AG04449 (cell line): ENCODE measurements at regions of chr1 and their contacts with region 1.

Region 1: DNA sequence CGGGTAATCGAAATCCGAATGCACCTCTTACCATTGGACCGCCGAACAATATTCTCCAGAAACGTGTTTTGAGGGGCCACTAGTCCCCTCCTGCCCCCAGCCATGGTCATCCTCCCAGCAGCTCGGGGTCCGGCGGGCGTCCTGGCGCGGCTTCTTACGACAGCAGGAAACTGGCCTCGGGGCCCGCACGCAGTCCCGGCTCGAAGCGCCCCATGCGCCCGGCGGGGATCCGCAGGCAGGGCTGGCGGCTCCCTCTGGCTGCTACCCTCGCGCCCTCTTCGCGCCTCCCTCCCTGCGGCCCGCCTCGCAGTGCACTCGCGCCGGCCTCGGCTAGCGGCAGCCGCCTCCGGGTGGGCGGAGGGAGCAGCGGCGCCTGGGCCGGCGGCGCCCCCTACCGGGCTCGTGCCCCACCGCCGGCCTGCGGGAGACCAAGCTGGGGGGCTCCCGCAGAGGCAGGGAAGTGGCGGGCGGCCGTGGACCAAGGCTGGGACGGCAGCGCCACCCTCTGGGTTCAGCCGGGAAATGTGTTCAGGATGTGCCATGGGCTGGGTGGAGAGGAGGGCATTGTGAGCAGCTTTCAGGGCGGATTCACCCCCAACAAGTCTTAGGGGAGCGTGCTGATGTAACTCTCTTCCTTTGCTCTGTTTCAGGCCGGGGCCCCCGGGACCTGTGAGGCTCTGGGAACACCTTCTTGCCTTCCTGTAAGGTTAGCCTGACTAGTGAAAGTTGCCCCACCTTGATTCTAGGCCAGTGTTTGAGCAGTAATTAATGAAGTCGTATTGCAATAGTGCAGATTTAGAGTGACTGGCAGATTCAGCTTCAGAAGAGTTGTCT is at the start of gene KCNH1:
- DNase-seq: no peak
- H3K4me3 ChIP-seq: peak within 1 kb of the TSS; percentile 66
- CTCF ChIP-seq: peak; percentile 83

Region 2: DNA sequence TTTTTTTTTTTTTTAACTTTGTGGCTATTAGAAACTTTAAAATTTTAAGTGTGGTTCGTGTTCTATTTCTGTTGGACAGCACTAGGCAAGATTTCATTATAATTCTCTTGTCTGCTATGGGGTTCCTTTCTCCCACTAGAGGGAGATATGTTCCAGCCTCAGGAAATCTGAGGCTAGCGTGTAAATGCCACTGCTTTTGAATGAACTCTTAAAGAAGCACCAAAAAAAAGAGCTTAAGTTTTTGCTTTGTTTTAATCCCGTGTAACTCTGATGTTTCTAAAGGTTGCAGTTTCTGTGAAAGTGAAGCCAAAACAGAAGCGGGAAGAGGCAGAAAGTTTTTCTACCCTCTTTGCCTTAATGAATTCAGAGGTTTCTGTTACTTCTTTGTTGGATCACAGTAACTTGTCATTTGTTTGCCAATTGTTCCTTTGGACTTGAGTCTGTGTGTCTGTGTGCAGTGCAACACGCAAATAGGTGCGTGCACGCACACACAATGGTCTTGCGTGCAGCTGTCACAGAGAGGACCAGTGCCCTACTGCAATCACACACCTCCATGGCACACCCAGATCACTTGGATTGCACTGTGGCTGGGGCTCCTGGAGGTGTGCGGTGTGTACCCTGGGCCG is 773.1 kb before region 1 on chr1:
- CTCF ChIA-PET with region 1: interaction called, 16 read pairs
- POLR2A ChIA-PET with region 1: no interaction called
- DNase-seq: peak; percentile 37
- H3K4me3 ChIP-seq: no peak overlapping the region
- CTCF ChIP-seq: peak; percentile 60

Region 3: GRCh38 chr1:210415846-210416448 is 718.1 kb before region 1 on chr1:
- CTCF ChIA-PET with region 1: interaction called, 116 read pairs
- POLR2A ChIA-PET with region 1: no interaction called
- DNase-seq: no peak
- H3K4me3 ChIP-seq: no peak overlapping the region
- CTCF ChIP-seq: no peak

Region 4: GRCh38 chr1:210455840-210456603 is 678.0 kb before region 1 on chr1:
- CTCF ChIA-PET with region 1: interaction called, 403 read pairs
- POLR2A ChIA-PET with region 1: no interaction called
- DNase-seq: no peak
- H3K4me3 ChIP-seq: no peak overlapping the region
- CTCF ChIP-seq: no peak

Region 5: DNA sequence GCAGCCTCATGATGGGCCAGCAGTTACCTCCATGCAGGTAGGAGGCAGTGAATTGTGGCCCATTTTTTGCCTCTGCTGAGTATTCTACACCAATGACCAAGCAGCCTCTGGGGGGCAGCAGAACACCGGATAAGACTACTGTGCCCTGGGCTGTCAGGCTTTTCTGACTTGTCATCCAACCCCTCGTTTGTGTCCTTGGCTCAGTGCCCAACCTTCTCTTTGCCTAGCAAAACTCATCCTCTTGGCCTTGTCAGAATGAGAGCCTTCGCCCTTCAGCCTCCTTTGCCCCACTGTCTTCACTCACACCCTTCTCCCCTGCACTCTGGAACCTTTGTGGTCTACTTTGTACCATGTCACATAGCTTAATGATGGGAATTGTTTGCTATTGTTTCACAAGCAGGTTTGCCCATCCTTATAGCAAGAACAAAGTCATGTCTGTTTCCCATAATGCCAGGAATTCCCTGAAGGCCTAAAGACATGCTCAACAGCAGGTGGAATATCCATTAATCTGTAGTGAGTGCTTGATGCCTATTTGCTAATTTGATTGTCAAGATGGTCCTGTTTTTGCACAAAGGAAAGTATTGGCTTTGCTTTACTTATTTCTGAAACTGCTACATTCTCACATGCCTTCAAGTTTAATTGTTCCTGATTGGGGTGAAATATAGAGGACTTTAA is 549.5 kb before region 1 on chr1:
- CTCF ChIA-PET with region 1: interaction called, 363 read pairs
- POLR2A ChIA-PET with region 1: no interaction called
- DNase-seq: no peak
- H3K4me3 ChIP-seq: no peak overlapping the region
- CTCF ChIP-seq: peak; percentile 82

Region 6: DNA sequence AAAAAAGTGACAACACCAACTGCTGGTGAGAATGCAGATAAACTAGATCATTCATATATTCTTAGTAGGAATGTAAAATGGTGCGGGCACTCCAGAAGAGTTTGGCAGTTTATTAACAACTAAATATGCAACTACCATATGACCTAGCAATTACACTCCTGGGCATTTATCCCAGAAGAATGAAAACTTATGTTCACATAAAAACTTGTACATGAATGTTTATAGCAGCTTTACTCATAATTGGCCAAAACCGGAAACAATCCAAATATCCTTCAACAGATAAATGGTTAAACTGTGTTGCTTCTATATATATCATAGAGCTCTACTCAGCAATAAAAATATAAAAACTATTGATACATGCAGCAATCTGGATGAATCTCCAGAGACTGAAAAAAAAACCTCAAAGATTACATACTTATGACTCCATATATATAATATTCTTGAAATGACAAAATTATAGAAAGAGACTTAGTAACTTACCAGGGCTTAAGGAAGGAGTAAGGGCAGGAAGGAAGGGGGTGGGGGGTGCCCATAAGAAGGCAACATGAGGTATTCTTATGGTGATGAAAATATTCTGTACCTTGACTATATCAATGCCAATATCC is 100.0 kb before region 1 on chr1:
- CTCF ChIA-PET with region 1: no interaction called
- POLR2A ChIA-PET with region 1: no interaction called
- DNase-seq: no peak
- H3K4me3 ChIP-seq: no peak overlapping the region
- CTCF ChIP-seq: no peak

Region 7: DNA sequence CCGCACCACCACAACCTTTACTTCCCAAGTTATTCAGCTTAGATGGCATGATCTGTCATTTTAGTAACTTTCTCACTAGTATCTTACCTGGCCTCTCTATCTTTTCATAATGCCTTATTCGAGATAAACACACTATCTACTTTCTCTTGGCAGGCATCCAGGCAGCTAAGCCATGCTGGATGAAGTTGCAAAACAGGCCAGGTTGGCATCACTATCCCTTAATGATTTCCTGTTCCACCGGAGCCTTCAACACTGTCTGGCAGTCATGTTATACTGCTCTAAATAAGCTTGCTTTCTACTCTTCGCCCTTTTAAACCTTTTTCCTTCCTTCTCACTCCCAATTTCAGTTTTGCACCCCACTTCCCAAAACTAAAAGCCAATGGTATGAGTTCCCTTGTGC is 11.9 kb after region 1 on chr1:
- CTCF ChIA-PET with region 1: interaction called, 22 read pairs
- POLR2A ChIA-PET with region 1: interaction called, 4 read pairs
- DNase-seq: no peak
- H3K4me3 ChIP-seq: no peak overlapping the region
- CTCF ChIP-seq: no peak